GM12878 (cell line): ENCODE measurements at regions of chr14 and their contacts with region 1.

Region 1: GRCh38 chr14:70821584-70822529 is 12.5 kb upstream of the MAP3K9 start:
- DNase-seq: no peak
- ATAC-seq: peak; percentile 67
- H3K4me3 ChIP-seq: peak overlapping the region; percentile 74
- H3K27ac ChIP-seq: no peak overlapping the region
- H3K4me1 ChIP-seq: peaks cover 4% of the 10 kb centered on the region; the same call in 1 of the 2 replicates
- H3K27me3 ChIP-seq: peaks cover 0 to 5% of the 10 kb centered on the region in 2 experiments; a peak in 1 of 4 replicates
- CTCF ChIP-seq: no peak
- EP300 ChIP-seq: no peak
- POLR2A ChIP-seq: peak; percentile 63
- RAD21 ChIP-seq: no peak

Region 2: GRCh38 chr14:70622111-70622712 is 199.6 kb before region 1 on chr14:
- CTCF ChIA-PET with region 1: interaction called, 71 read pairs
- POLR2A ChIA-PET with region 1: no interaction called
- RAD21 ChIA-PET with region 1: interaction called, 6 read pairs
- SMC1A ChIA-PET with region 1: interaction called, 37 read pairs
- in situ Hi-C with region 1: loop called (anchors 5 kb)
- intact Hi-C with region 1: loop called (anchors 1 kb)
- DNase-seq: no peak
- ATAC-seq: peak; percentile 93
- H3K4me3 ChIP-seq: no peak overlapping the region
- H3K27ac ChIP-seq: no peak overlapping the region
- H3K4me1 ChIP-seq: no peaks in the 10 kb centered on the region
- H3K27me3 ChIP-seq: no peaks in the 10 kb centered on the region
- CTCF ChIP-seq: peak; percentile 87 to 91 (median 90)
- EP300 ChIP-seq: no peak
- POLR2A ChIP-seq: no peak
- RAD21 ChIP-seq: peak; percentile 97

Region 3: DNA sequence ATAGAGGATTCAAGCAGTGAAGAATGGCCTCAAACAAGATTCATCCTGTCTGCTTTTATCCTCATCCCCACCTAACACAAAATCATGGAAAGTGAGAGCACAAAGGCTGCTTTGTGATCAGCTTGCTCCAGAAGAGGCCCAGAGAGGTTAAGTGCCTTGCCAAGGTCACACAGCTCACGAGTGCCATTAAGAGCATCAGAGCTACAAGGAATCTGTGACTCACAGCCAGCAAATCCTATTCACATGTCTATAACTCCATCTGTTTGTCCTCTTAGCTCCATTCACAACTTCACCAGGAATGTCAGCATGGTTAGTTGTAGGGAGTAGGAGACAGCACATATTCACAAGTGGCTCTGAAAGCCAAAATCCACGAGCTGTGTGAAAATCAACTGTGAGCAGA is 100.3 kb before region 1 on chr14:
- CTCF ChIA-PET with region 1: interaction called, 14 read pairs
- POLR2A ChIA-PET with region 1: no interaction called
- RAD21 ChIA-PET with region 1: interaction called, 3 read pairs
- SMC1A ChIA-PET with region 1: no interaction called
- in situ Hi-C with region 1: no loop called
- intact Hi-C with region 1: no loop called
- DNase-seq: no peak
- ATAC-seq: no peak
- H3K4me3 ChIP-seq: no peak overlapping the region
- H3K27ac ChIP-seq: no peak overlapping the region
- H3K4me1 ChIP-seq: no peaks in the 10 kb centered on the region
- H3K27me3 ChIP-seq: no peaks in the 10 kb centered on the region
- CTCF ChIP-seq: no peak
- EP300 ChIP-seq: no peak
- POLR2A ChIP-seq: no peak
- RAD21 ChIP-seq: no peak

Region 4: DNA sequence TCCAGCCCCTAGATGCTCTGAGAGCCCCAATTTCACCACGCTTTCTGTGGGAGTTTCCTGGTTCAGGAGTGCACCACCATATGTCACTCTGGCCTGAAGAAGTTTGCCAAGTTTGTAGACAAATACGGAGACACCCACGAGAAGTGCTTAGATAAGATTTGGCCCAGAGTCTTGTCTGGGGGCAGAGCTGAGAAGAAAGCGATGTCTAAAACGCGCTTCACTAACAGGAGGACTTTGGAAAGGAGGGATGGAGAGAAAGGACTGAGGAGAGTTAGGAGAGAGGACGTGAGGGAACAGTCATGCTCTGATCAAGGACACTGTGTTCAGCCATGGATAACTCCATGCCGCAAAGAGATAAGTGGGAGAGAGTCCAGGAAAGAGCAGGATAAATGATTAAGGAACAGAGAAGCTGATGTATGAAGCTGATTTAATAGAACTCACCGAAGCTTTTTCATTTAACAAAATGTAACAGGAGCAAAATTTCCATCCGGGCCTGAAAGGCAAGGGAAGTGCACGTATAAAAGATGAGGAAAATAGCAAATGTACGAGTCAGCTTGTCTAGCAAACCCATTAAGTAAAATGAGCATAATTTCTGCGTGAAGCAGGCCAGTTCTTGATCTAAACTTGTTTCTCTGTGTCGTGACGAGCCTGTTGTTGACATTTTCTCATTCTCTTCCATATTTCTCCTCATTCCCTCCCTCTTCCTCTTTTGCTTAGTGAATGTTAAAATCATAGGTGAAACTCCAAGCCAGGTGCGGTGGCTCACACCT is 10.9 kb after region 1 on chr14:
- CTCF ChIA-PET with region 1: interaction called, 28 read pairs
- POLR2A ChIA-PET with region 1: no interaction called
- RAD21 ChIA-PET with region 1: interaction called, 9 read pairs
- SMC1A ChIA-PET with region 1: interaction called, 10 read pairs
- in situ Hi-C with region 1: no loop called
- intact Hi-C with region 1: no loop called
- DNase-seq: no peak
- ATAC-seq: no peak
- H3K4me3 ChIP-seq: no peak overlapping the region
- H3K27ac ChIP-seq: no peak overlapping the region
- H3K4me1 ChIP-seq: no peaks in the 10 kb centered on the region
- H3K27me3 ChIP-seq: no peaks in the 10 kb centered on the region
- CTCF ChIP-seq: no peak
- EP300 ChIP-seq: no peak
- POLR2A ChIP-seq: no peak
- RAD21 ChIP-seq: no peak

Region 5: DNA sequence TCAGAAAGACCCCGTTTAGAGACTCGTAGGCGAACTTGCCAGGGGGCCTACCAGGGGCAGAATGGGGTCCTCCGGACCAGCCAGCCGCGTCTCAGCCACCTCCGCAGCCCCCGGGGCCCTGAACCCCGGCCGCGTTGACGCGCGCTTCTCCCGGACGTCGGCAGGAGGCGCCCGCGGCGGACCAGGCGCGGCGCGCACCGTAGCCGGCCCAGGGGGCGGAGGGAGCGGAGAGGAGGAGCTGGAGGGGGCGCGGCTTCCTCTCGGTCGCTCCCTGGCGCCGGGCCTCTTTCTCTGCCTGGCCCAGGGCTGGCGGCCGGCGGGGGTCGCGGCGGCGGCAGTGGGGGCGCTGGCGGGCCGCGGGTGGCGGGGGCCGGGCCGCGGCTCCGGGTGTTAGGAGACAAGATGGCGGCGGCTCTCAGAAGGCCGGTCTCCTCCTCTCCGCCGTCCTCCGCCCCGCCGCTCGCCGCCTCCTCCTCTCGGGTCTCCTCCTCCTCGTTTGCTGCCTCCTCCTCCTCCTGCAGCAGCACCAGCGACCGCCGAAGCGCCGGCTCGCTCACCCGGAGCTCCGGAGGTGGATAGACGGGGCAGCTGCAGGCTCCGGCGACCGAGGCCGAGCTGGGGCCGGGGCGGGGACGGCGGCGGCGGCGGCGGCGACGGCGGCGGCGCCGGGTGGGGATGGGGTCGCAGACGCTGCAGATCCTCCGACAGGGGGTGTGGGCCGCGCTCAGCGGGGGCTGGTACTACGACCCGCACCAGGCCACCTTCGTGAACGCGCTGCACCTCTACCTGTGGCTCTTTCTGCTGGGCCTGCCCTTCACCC is 85.5 kb after region 1 on chr14 and contains the start of gene PCNX1:
- CTCF ChIA-PET with region 1: interaction called, 69 read pairs
- POLR2A ChIA-PET with region 1: interaction called, 3 read pairs
- RAD21 ChIA-PET with region 1: interaction called, 26 read pairs
- SMC1A ChIA-PET with region 1: interaction called, 14 read pairs
- in situ Hi-C with region 1: no loop called
- intact Hi-C with region 1: loop called (anchors 2 kb)
- DNase-seq: no peak
- ATAC-seq: peak; percentile 75
- H3K4me3 ChIP-seq: peak within 1 kb of the TSS; percentile 91
- H3K27ac ChIP-seq: peak within 1 kb of the TSS; percentile 87
- H3K4me1 ChIP-seq: 0 out of 2 replicates have a peak, but pooled peaks cover 5% of the 10 kb centered on the region
- H3K27me3 ChIP-seq: no peaks in the 10 kb centered on the region
- CTCF ChIP-seq: peak; percentile 77 to 89 (median 77); a peak in 5 of 6 replicates
- EP300 ChIP-seq: no peak; a peak in 1 of 4 replicates
- POLR2A ChIP-seq: peak; percentile 72; the same call in 1 of the 2 replicates
- RAD21 ChIP-seq: peak; percentile 73
- polyA plus RNA-seq, gene PCNX1: 4.6 to 5.1 TPM

Region 6: DNA sequence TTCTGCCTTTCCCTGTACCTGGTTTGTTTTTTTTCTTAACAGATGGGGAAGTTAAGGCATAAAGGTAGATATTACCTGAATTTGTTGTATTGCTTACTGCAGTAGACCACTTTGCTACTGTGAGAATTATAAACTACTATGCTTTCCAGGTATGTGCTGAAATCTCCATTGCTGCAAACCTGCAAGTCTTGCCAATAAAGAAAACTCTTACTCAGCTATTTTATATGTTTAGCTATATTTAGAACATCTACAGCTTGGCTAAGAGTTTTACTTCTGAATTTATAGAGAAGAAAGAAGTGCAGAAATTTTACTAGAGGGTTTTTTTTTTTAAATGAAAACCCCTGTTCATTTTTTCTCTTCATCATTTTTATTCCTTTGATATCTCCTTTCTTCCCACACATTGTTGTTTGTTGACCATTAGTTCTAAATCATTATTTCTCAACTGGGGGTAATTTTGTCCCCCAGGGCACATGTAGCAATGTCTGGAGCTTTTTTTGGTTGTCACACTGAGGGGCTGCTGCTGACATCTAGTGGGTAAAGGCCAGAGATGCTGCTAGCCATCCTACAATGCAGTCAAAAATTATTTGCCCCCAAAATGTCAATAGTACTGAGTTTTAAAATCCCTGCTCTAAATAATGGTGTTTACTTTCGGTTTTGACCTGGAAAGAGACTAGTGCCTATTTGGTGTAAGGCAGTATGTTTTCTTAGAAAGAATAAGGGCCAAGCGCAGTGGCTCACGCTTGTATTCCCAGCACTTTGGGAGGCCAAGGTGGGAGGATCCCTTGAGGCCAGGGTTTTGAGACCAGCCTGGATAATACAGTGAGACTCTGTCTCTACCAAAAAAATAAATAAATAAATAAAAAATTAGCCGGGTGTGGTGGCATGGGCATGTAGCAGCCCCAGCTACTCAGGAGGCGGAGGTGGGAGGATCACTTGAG is 134.0 kb after region 1 on chr14:
- CTCF ChIA-PET with region 1: interaction called, 160 read pairs
- POLR2A ChIA-PET with region 1: interaction called, 11 read pairs
- RAD21 ChIA-PET with region 1: interaction called, 98 read pairs
- SMC1A ChIA-PET with region 1: interaction called, 119 read pairs
- in situ Hi-C with region 1: no loop called
- intact Hi-C with region 1: loop called (anchors 1 kb)
- DNase-seq: no peak
- ATAC-seq: peak; percentile 87
- H3K4me3 ChIP-seq: no peak overlapping the region
- H3K27ac ChIP-seq: no peak overlapping the region
- H3K4me1 ChIP-seq: no peaks in the 10 kb centered on the region
- H3K27me3 ChIP-seq: no peaks in the 10 kb centered on the region
- CTCF ChIP-seq: peak; percentile 71 to 74 (median 73)
- EP300 ChIP-seq: no peak
- POLR2A ChIP-seq: no peak
- RAD21 ChIP-seq: peak; percentile 84